K562 (cell line): ENCODE measurements at regions of chr1 and their contacts with region 1.

Region 1: DNA sequence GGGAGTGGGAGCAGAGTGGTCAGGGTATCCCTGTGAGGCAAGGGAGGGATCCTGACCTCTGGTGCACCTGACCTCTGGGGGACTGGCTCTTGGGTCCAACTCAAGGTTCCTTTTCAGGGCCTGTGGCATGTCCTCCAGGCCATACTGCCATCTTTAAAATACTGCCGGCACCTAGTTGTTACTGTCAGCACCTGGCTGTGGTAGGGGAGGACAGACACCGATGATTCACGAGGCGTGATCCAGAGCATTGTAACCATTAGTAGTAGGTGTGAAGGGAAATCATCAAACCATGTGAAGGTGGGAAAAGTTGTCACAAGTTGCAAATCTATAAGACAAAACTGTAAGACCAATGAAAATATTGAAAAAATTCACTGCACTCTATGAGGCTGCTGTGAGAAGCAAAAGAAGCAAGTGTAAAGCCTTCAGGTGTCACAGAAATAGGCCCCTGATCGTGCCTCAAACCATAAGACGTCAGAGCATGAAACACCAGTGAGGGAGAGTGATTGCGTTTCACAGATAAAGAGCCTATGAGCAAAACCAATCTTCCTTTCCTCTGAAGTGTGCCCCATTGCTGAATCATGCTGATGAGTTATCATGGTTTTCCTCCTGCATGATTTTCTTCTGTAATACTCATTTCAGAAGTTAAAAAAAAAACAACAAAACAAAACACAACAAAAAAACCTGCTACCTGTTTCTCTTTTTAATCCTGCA is 55.3 kb downstream of the CDC7 start:
- DNase-seq: peak; percentile 33 to 85 (median 62)
- ATAC-seq: peak; percentile 93
- H3K4me3 ChIP-seq: no peak overlapping the region
- H3K27ac ChIP-seq: peak overlapping the region; percentile 56; the same call in 2 of the 3 replicates
- H3K4me1 ChIP-seq: peaks cover 14 to 29% of the 10 kb centered on the region in 2 experiments
- H3K27me3 ChIP-seq: no peaks in the 10 kb centered on the region
- CTCF ChIP-seq: no peak
- EP300 ChIP-seq: peak; percentile 82
- POLR2A ChIP-seq: no peak
- RAD21 ChIP-seq: no peak; a peak in 1 of 4 replicates

Region 2: DNA sequence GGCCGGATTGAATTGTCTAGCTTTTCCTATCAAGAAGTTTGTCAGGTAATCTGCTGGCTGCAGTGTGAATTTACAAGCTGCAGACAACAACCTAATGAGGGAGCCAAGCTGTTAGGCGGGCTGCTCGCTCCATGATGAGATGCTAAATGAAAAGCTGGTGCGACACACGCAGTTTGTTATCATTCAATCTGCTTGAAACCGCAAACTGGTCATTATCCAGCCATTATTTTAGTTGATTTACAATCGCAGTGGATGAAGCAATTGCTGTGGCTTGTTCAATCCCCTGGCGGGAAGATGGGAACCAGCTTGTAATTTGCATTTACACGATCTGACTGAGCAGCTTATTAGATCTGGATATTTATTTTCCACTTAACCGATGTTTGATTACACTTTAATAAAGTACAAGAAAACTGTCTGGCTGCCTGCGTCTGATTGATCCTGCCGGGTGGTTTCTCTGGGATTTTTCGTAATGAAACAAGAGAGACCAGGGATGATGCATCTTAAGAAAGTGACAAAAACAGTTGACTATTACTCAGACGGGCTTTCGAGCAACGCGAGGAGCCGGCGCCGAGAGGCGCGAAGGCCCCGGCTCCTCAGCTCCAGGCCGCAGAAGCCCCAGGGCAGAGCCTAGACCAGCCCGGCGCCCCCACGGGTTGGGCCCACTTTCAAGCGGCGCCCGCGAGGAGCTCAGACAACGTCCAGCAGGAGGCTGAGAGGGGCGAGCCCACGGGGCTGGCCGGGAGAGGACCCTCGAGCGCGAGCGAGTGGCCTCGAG is 720.9 kb before region 1 on chr1:
- CTCF ChIA-PET with region 1: no interaction called
- POLR2A ChIA-PET with region 1: no interaction called
- in situ Hi-C with region 1: no loop called
- intact Hi-C with region 1: no loop called
- DNase-seq: no peak
- ATAC-seq: no peak
- H3K4me3 ChIP-seq: no peak overlapping the region
- H3K27ac ChIP-seq: no peak overlapping the region
- H3K4me1 ChIP-seq: peaks cover 8 to 9% of the 10 kb centered on the region in 2 experiments; a peak in 4 of 5 replicates
- H3K27me3 ChIP-seq: no peaks in the 10 kb centered on the region
- CTCF ChIP-seq: no peak
- EP300 ChIP-seq: no peak
- POLR2A ChIP-seq: no peak
- RAD21 ChIP-seq: no peak

Region 3: DNA sequence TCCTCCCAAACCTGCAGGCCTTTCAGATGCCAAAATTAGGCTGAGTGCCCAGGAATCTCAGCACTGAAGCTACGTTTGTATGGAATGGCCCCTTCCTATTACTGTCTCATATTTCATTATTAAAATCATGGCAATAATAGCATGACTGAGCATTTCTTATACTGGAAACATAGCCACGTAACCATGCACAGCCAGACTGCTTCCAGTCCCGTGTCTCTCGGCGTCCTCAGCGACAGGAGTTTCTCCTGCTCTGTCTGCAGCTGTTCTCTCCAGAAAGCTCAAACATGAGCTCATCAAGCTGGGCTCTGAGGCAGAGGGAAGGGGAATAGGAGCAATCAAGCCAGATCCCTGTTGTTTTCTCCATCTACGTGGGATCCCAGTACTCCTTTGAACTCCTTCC is 48.7 kb after region 1 on chr1:
- CTCF ChIA-PET with region 1: no interaction called
- POLR2A ChIA-PET with region 1: no interaction called
- in situ Hi-C with region 1: no loop called
- intact Hi-C with region 1: no loop called
- DNase-seq: no peak
- ATAC-seq: no peak
- H3K4me3 ChIP-seq: no peak overlapping the region
- H3K27ac ChIP-seq: no peak overlapping the region
- H3K4me1 ChIP-seq: peaks cover 9 to 15% of the 10 kb centered on the region in 2 experiments; a peak in 4 of 5 replicates
- H3K27me3 ChIP-seq: no peaks in the 10 kb centered on the region
- CTCF ChIP-seq: no peak
- EP300 ChIP-seq: no peak
- POLR2A ChIP-seq: no peak
- RAD21 ChIP-seq: no peak

Region 4: DNA sequence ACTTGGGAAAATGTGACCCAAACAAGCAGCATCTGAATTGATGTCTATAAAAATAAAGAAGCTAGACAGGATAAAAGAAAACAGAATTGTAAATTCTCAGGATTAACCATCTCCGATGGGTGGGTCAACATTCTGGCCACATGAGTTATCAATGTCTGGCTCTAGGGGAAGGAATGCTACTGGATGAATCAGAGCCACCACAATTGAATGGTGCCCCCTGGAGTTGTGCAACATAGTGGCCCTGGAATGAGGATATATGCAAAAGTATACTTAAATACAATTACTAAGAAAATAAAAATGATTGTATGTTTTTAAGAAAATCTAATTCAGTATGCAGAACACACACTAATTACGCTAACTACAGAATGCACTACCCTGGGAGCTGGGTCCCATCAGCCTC is 144.4 kb after region 1 on chr1:
- CTCF ChIA-PET with region 1: no interaction called
- POLR2A ChIA-PET with region 1: no interaction called
- in situ Hi-C with region 1: no loop called
- intact Hi-C with region 1: loop called (anchors 10 kb)
- DNase-seq: no peak
- ATAC-seq: no peak
- H3K4me3 ChIP-seq: no peak overlapping the region
- H3K27ac ChIP-seq: no peak overlapping the region
- H3K4me1 ChIP-seq: peaks cover 8 to 16% of the 10 kb centered on the region in 2 experiments; a peak in 4 of 5 replicates
- H3K27me3 ChIP-seq: no peaks in the 10 kb centered on the region
- CTCF ChIP-seq: peak in 1 of 3 experiments; percentile 25; a peak in 1 of 6 replicates
- EP300 ChIP-seq: no peak
- POLR2A ChIP-seq: no peak
- RAD21 ChIP-seq: no peak